K562 (cell line): ENCODE measurements at regions of chr9 and their contacts with region 1.

Region 1: DNA sequence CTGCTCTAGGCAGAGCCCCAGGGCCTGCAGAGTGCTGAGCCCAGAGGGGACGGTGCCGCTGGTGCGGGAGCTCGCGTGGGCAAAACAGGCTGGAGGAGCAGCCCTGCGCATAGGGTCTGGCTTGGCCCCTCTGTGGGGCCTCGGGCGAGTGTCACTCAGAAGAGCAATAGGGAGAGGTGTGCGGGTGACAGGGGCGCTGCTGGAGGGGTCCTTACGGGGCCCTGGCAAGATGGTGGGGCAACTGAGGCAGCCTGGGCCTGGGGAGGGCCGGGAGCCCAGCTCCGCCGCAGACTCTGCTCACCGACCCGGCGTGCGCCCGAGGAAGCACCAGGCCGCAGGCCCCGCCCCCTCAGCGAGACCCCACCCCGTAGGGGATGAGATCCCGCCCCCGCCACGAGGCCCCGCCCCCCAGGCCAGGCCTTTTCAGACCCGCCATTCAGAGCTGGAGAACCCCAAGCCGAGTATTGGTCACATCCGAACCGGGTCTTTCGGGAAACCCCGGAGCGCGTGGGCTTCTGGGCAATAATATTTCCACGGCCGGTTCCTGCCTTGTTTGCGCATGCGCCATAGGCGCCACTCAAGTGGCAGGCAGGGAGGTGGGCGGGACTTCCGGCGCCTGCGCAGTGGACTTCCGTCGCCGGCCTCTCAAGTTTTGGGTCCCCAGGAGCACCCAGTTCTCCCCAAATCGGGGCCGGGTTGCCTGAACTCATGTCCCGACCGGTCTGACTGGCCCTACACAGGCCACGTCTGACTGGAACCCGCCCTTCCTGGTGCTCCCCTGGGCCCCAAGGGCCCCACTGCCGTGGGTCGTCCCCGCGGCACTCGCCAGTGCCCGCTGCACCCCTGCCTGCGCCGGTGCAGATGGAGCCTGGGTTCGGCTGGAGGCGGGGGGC is 1.3 kb upstream of the RNF208 start:
- DNase-seq: peak; percentile 94 to 99 (median 96)
- ATAC-seq: peak; percentile 84
- H3K4me3 ChIP-seq: peak overlapping the region; percentile 85
- H3K27ac ChIP-seq: peak overlapping the region; percentile 83
- H3K4me1 ChIP-seq: peaks cover 28 to 95% of the 10 kb centered on the region in 2 experiments
- H3K27me3 ChIP-seq: no peaks in the 10 kb centered on the region
- CTCF ChIP-seq: no peak
- EP300 ChIP-seq: no peak; the same call in 1 of the 2 replicates
- POLR2A ChIP-seq: peak; percentile 89
- RAD21 ChIP-seq: no peak

Region 2: DNA sequence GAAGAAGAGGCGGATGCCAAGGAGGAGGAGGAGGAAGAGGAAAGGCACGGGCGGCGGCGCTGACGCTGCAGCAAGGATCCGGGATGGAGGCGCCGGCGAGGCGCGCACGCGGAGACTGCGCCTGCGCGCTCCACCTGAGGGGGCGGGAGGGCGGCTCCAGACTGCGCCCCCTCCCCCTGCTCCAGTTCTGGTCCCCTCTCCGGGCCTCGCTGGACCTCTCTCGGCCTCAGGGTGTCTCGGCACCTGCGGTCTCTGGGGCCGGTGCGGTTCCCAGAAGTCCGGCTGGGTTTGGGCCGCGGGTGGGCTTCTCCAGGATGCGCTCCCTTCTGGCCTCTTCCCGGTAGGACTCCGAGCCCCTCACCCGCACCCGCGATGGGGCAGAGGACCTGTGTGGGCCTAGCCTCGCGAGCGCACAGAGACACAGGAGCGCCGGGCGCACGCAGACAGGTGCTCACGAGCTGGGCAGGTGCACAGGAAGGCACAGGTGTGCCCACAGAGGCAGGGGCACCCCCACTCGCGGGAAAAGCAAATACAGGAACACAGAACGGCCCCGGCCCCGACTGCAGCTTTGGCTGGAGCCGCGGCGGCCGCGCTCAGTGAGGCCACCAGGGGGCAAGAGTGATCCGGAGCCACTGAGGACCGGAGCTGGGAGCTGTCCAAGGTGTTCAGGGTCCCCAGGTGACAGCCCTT is 177.1 kb before region 1 on chr9 and contains the start of gene NPDC1:
- CTCF ChIA-PET with region 1: interaction called, 4 read pairs
- POLR2A ChIA-PET with region 1: interaction called, 6 read pairs
- in situ Hi-C with region 1: no loop called
- intact Hi-C with region 1: loop called (anchors 2 kb)
- DNase-seq: peak; percentile 83 to 91 (median 86)
- ATAC-seq: peak; percentile 82
- H3K4me3 ChIP-seq: no peak within 1 kb of the TSS
- H3K27ac ChIP-seq: no peak within 1 kb of the TSS
- H3K4me1 ChIP-seq: peaks cover 2 to 79% of the 10 kb centered on the region in 2 experiments; a peak in 4 of 5 replicates
- H3K27me3 ChIP-seq: peaks cover 7 to 39% of the 10 kb centered on the region in 2 experiments; a peak in 4 of 5 replicates
- CTCF ChIP-seq: peak; percentile 87 to 94 (median 87)
- EP300 ChIP-seq: no peak
- POLR2A ChIP-seq: no peak
- RAD21 ChIP-seq: peak; percentile 50 to 81; a peak in 3 of 4 replicates
- polyA plus RNA-seq, gene NPDC1: not detected

Region 3: GRCh38 chr9:137114610-137115391 is 108.5 kb before region 1 on chr9 and contains the start of gene DPP7:
- CTCF ChIA-PET with region 1: interaction called, 5 read pairs
- POLR2A ChIA-PET with region 1: interaction called, 3 read pairs
- in situ Hi-C with region 1: no loop called
- intact Hi-C with region 1: loop called (anchors 2 kb)
- DNase-seq: peak; percentile 85 to 95 (median 93)
- ATAC-seq: peak; percentile 88
- H3K4me3 ChIP-seq: peak within 1 kb of the TSS; percentile 72
- H3K27ac ChIP-seq: peak within 1 kb of the TSS; percentile 76
- H3K4me1 ChIP-seq: peaks cover 18 to 71% of the 10 kb centered on the region in 2 experiments
- H3K27me3 ChIP-seq: no peaks in the 10 kb centered on the region
- CTCF ChIP-seq: no peak
- EP300 ChIP-seq: no peak
- POLR2A ChIP-seq: peak; percentile 54
- RAD21 ChIP-seq: no peak
- polyA plus RNA-seq, gene DPP7: 0.99 to 4.1 TPM

Region 4: DNA sequence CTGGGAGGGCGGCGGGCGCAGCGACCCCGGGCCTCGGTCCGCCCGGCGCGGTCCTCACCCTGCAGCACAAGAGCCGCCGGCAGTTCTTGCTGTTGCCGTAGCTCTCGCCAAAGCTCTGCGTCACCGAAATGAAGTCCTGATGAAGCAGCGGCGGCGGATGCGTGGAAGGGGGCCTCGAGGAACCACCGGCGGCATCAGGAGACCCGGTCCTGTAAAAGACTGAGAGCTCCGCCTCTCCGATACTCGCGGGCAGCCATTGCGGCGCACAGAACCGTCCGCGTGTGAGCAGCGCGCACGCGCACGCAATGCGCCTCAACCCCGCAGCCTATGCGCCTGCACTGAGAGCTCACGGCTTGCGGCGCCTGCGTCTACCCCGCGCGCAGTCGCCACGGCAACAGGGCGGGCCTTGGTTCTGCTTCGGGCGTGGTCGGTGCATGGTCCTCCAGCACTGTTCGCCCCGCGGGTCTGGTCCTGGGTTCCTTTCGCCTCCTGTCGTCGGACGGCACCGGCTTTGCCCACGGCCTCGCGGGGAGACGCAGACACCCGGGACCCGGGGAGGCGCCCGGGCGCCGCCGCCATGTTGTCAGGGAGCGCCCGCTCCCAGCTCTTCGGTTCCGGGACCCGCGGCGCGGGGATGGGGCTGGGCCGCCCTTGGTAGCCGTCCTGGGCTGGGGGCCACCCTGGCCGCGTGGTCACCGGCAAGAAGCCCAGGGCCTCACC is 93.7 kb before region 1 on chr9:
- CTCF ChIA-PET with region 1: no interaction called
- POLR2A ChIA-PET with region 1: interaction called, 6 read pairs
- in situ Hi-C with region 1: loop called (anchors 5 kb)
- intact Hi-C with region 1: no loop called
- DNase-seq: peak; percentile 88 to 97 (median 90)
- ATAC-seq: peak; percentile 95
- H3K4me3 ChIP-seq: peak overlapping the region; percentile 91
- H3K27ac ChIP-seq: peak overlapping the region; percentile 78
- H3K4me1 ChIP-seq: peaks cover 12 to 37% of the 10 kb centered on the region in 2 experiments; a peak in 4 of 5 replicates
- H3K27me3 ChIP-seq: no peaks in the 10 kb centered on the region
- CTCF ChIP-seq: peak in 1 of 3 experiments; percentile 20; a peak in 2 of 6 replicates
- EP300 ChIP-seq: no peak
- POLR2A ChIP-seq: peak; percentile 88
- RAD21 ChIP-seq: no peak

Region 5: GRCh38 chr9:137188490-137189296 is 34.6 kb before region 1 on chr9 and contains the starts of genes ANAPC2 and SSNA1:
- CTCF ChIA-PET with region 1: interaction called, 19 read pairs
- POLR2A ChIA-PET with region 1: interaction called, 6 read pairs
- in situ Hi-C with region 1: loop called (anchors 5 kb)
- intact Hi-C with region 1: loop called (anchors 1 kb)
- DNase-seq: peak; percentile 93 to 98 (median 96)
- ATAC-seq: peak; percentile 96
- H3K4me3 ChIP-seq: peak within 1 kb of the TSS; percentile 98
- H3K27ac ChIP-seq: peak within 1 kb of the TSS; percentile 94
- H3K4me1 ChIP-seq: peaks cover 20 to 95% of the 10 kb centered on the region in 2 experiments
- H3K27me3 ChIP-seq: no peaks in the 10 kb centered on the region
- CTCF ChIP-seq: peak; percentile 59 to 91 (median 83)
- EP300 ChIP-seq: peak; percentile 52
- POLR2A ChIP-seq: peak; percentile 82
- RAD21 ChIP-seq: peak; percentile 83
- polyA plus RNA-seq, gene ANAPC2: 0.11 TPM in 1 of 2 experiments, not detected in the other
- polyA plus RNA-seq, gene SSNA1: 1.9 to 11.8 TPM

Region 6: GRCh38 chr9:137254624-137255447 is 31.5 kb after region 1 on chr9 and contains the start of gene NELFB:
- CTCF ChIA-PET with region 1: no interaction called
- POLR2A ChIA-PET with region 1: interaction called, 10 read pairs
- in situ Hi-C with region 1: no loop called
- intact Hi-C with region 1: no loop called
- DNase-seq: peak; percentile 94 to 99 (median 98)
- ATAC-seq: peak; percentile 82
- H3K4me3 ChIP-seq: peak within 1 kb of the TSS; percentile 100
- H3K27ac ChIP-seq: peak within 1 kb of the TSS; percentile 84
- H3K4me1 ChIP-seq: peaks cover 13 to 68% of the 10 kb centered on the region in 2 experiments
- H3K27me3 ChIP-seq: no peaks in the 10 kb centered on the region
- CTCF ChIP-seq: 0 out of 6 replicates have a peak, but pooled peaks of 1 of the 3 experiments have one; percentile 7
- EP300 ChIP-seq: no peak
- POLR2A ChIP-seq: peak; percentile 85
- RAD21 ChIP-seq: no peak
- polyA plus RNA-seq, gene NELFB: 0.24 to 0.49 TPM